Right ventricle myocardium inferior (tissue), 1 donor: ENCODE measurements at regions of chr7 and their contacts with region 1.

Region 1: GRCh38 chr7:139731802-139732470 is 45.9 kb downstream of the HIPK2 start:
- DNase-seq: peak; percentile 82
- ATAC-seq: peak; percentile 77

Region 2: DNA sequence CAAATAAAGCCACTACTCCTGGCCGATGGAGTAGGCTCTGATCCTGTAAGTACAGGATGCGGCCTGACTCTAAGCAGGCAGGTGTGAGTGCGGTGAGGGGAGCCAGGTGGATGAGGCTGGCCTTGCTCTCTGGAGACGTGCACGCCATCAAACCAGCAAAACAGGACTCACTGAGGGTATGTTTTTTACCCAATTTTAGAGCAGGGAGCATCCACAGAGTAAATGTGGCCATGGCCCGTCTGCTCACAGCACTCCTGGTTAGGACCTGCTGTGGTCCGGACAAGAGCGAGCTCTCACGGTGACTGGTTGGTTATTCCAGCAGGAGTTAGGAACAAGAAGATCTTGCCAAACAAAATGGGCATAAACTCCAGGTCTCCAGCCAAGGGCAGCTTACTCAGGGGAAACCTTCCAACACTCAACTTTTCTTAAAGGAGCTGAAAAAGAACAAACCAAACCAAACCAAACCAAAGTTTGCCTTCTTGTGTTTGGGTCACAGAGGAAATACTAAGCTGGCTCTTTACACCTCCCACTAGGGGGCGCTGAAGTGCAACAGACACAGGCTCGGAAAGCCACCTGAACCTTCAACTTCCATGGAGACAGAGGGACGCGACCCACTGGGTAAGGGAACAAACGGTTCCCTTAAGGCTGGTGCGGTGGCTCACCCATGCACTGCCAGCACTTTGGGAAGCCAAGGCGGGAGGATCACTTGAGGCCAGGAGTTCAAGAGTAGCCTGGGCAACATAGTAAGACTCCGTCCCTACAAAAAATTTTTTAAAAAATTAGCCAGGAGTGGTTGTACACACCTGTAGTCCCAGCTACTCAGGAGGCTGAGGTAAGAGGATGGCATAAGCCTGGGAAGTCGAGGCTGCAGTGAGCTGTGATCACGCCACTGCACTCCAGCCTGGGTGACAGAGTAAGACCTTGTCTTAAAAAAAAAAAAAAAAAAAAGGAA is 86.1 kb before region 1 on chr7:
- intact Hi-C with region 1: loop called (anchors 5 kb)
- DNase-seq: peak; percentile 79
- ATAC-seq: peak; percentile 61

Region 3: DNA sequence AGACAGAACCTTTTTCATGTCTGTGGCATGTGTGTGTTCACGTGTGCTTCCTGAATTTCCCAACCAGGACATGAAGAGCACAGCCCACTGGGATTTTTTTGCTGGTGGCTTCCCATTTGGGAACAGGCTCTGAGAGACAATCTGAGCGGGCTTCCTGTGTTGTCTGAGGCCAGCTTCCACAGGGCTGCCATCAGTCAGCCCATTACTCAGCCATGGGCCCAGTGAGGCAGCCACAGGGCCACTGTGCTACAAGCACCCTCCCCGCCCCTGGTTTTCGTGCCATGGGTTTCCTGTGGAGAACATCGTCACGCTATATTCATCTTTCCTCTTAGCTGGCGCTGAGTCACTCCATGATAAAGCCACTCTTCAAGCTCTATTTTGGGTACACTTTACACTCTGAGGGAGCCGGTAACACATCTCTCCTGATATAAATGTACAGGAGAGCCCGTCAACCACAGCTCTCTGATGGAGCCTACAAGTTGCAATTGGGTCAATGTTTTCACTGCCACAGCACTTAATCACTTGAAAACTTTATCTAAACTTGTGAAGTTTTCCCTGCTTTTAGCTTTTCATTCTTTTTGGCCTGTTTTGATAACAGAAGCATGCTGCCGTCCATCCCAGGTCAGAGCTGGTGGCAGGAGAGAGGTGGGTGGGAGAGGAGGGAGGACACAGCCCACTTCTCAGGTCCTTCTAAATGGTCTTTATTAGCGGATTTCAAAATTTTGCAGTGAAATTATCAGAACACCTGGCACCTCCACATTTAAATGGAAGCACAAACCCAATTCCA is 51.1 kb before region 1 on chr7:
- intact Hi-C with region 1: loop called (anchors 2 kb)
- DNase-seq: peak; percentile 86
- ATAC-seq: peak; percentile 90